ENCODE measurements at regions of chr6 and their contacts with region 1.

Region 1: DNA sequence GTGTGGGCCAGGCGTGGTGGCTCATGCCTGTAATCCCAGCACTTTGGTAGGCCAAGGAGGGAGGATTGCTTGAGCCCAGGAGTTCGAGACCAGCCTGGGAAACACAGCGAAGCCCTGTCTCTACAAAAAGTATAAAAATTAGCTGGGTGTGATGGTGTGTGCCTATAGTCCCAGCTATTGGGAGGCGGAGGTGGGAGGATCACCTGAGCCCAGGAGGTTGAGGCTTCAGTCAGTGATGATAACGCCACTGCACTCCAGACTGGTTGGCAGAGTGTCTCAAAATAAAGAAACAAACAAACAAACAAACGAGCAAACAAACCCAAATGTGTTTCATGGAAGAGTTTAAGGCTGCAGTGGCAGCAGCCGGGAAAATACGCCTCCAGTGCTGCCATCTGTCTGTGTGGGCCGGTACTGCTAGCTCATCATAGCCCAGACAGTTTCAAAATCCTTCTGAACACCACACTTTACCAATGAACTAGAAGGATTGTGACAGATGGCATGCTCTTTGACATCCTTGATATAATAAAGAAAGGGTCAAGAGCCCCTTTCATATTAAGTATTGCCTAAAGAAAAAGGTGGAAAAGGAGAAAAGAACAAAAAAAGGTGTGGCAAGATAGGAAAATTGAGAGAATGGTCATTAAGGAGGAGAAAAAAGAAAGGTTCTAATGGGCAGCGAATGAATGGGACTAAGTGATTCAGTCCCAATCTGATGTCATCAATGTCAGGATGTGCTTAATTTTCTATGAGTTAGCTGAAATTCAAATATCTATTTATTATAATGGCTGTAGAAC is 298.6 kb downstream of the SYNE1 start:
- DNase-seq: no peak
- H3K4me3 ChIP-seq: no peak overlapping the region
- H3K27ac ChIP-seq: no peak overlapping the region
- H3K27me3 ChIP-seq: no peaks in the 10 kb centered on the region
- CTCF ChIP-seq: peak; percentile 96

Region 2: GRCh38 chr6:152301764-152302568 is 36.6 kb before region 1 on chr6:
- CTCF ChIA-PET with region 1: interaction called, 19 read pairs
- POLR2A ChIA-PET with region 1: no interaction called
- DNase-seq: peak; percentile 78
- H3K4me3 ChIP-seq: peak overlapping the region; percentile 79
- H3K27ac ChIP-seq: peak overlapping the region; percentile 87
- H3K27me3 ChIP-seq: no peaks in the 10 kb centered on the region
- CTCF ChIP-seq: peak; percentile 60

Region 3: GRCh38 chr6:152316024-152316423 is 22.5 kb before region 1 on chr6:
- CTCF ChIA-PET with region 1: interaction called, 57 read pairs
- POLR2A ChIA-PET with region 1: no interaction called
- DNase-seq: peak; percentile 36
- H3K4me3 ChIP-seq: no peak overlapping the region
- H3K27ac ChIP-seq: peak overlapping the region; percentile 41
- H3K27me3 ChIP-seq: no peaks in the 10 kb centered on the region
- CTCF ChIP-seq: no peak

Region 4: GRCh38 chr6:152323376-152323775 is 15.2 kb before region 1 on chr6:
- CTCF ChIA-PET with region 1: interaction called, 57 read pairs
- POLR2A ChIA-PET with region 1: no interaction called
- DNase-seq: no peak
- H3K4me3 ChIP-seq: no peak overlapping the region
- H3K27ac ChIP-seq: no peak overlapping the region
- H3K27me3 ChIP-seq: no peaks in the 10 kb centered on the region
- CTCF ChIP-seq: no peak

Region 5: DNA sequence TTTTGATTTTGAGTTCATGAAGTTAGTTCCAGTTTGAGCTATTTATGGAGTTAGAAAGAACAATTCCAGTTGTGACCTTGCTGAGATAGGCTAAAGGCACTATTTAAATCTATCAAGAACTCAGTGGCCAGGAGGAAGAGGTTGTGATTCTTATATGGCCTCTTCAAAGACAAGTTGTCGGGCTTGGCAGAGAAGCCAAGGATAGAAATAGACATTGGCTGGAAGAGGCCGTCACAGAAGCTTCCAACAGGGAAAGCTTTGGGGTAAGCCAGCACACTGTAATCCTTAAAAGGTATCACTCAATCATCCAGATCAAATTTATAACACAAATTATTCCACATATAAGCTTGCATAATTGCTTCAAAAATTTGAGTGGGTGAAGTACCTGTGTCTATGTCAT is 12.6 kb after region 1 on chr6:
- CTCF ChIA-PET with region 1: interaction called, 31 read pairs
- POLR2A ChIA-PET with region 1: no interaction called
- DNase-seq: no peak
- H3K4me3 ChIP-seq: no peak overlapping the region
- H3K27ac ChIP-seq: no peak overlapping the region
- H3K27me3 ChIP-seq: no peaks in the 10 kb centered on the region
- CTCF ChIP-seq: no peak

Region 6: GRCh38 chr6:152356451-152357061 is 18.0 kb after region 1 on chr6:
- CTCF ChIA-PET with region 1: interaction called, 31 read pairs
- POLR2A ChIA-PET with region 1: no interaction called
- DNase-seq: no peak
- H3K4me3 ChIP-seq: no peak overlapping the region
- H3K27ac ChIP-seq: no peak overlapping the region
- H3K27me3 ChIP-seq: no peaks in the 10 kb centered on the region
- CTCF ChIP-seq: peak; percentile 41

Region 7: DNA sequence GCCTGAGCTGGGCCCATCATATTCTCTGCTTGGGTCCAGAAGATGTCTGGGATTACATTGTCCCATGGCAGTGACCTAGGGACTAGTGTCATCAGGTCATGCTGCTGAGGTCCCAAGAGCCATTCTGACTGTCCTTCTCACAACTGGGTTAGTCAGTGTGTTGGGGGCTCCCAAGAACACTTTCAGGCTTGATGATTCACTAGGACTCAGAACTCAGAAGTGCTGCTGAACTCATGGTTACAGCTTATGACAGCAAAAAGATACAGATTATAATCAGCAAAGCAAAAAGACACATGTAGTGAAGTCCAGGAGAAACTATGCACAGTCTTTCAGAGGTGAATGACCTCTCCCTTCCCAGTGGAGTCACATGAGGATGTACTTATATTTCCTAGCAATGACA is 190.8 kb after region 1 on chr6:
- CTCF ChIA-PET with region 1: no interaction called
- POLR2A ChIA-PET with region 1: no interaction called
- DNase-seq: peak; percentile 1
- H3K4me3 ChIP-seq: no peak overlapping the region
- H3K27ac ChIP-seq: no peak overlapping the region
- H3K27me3 ChIP-seq: no peaks in the 10 kb centered on the region
- CTCF ChIP-seq: no peak

Measured in AG04450 (cell line).